Left ventricle myocardium superior (tissue), 1 donor: ENCODE measurements at regions of chr7 and their contacts with region 1.

Region 1: DNA sequence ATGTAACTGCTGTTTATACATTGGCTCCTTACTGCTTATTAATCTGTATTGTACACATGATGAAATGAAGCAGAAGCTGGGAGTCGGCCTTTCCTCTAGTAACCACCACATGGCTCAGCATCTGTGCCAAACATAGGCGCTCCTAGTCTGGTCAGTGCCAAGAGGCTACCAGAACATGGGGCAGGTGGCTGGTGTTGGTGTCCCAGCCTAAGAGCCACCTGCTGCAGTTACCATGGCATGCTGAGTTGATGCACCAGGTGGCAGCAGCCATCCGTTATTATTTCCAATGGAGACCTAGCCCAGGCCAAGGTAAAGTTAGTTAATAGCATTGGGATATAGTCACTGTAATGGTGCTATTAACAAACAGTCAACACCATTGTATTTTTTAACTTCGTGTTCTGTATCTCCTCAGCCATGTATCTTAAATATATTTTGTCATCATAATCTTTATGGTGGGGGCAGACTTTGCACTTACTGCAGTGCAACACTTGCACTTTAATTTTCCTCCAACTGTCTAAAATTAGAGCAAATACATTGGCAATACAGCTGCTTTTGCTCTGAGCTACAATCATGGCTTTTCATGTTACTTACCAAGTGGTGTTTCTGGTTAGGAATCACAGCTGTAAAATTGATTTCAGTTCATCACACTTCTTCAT is 33.1 kb downstream of the HBP1 start:
- DNase-seq: peak; percentile 72
- ATAC-seq: peak; percentile 92

Region 2: GRCh38 chr7:106377847-106378361 is 824.0 kb before region 1 on chr7:
- intact Hi-C with region 1: no loop called
- DNase-seq: no peak
- ATAC-seq: no peak

Region 3: GRCh38 chr7:106520962-106521940 is 680.7 kb before region 1 on chr7:
- intact Hi-C with region 1: no loop called
- DNase-seq: no peak
- ATAC-seq: no peak

Region 4: GRCh38 chr7:107725151-107725740 is 523.3 kb after region 1 on chr7:
- intact Hi-C with region 1: loop called (anchors 10 kb)
- DNase-seq: no peak
- ATAC-seq: no peak